SK-N-SH (cell line): ENCODE measurements at regions of chr17 and their contacts with region 1.

Region 1: DNA sequence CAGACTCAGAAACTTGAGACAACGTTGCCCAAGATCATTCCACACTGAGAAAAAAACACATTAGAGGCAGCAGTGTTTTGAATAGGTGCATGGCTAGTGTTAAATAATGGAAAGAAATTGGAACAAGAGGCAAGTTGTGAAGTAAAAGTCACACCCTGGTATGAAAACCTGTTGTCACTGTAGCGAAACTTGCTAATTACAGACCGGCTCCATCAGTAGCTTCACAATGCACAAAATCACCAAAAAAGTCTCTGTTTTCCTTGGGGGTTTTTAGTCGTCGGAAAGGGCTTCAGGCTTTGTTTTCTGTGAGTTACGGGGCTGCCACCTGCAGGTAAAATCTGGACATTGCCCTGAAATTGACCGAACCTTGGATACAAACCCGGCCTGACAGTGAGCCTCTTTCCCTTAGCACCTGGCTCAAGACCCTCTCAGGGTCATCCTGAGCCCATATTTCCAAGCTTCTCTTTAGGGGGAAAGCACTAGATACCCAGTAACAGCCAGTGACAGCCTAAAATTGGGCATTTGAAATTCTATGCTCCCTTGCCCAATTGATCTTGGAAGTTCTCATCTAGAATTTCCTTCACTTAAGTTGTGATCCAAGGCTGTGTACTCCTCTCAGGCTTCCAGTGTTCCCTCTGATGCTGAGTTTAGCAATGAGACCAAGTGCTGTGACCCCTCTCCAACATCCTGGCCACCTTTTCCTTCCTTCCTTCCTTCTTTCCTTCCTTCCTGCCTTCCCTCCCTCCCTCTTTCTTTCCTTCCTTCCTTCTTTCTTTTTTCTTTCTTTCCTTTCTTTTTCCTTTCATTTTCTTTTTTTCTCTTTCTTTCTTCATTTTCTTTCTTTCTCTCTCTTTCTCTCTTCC is 7.2 kb upstream of the GRB2 start:
- DNase-seq: peak; percentile 81
- H3K4me3 ChIP-seq: peak overlapping the region; percentile 3 to 35; a peak in 3 of 4 replicates
- H3K27ac ChIP-seq: no peak overlapping the region
- H3K4me1 ChIP-seq: no peaks in the 10 kb centered on the region
- H3K27me3 ChIP-seq: peaks cover 22% of the 10 kb centered on the region
- CTCF ChIP-seq: peak; percentile 92
- EP300 ChIP-seq: no peak
- RAD21 ChIP-seq: peak; percentile 96

Region 2: DNA sequence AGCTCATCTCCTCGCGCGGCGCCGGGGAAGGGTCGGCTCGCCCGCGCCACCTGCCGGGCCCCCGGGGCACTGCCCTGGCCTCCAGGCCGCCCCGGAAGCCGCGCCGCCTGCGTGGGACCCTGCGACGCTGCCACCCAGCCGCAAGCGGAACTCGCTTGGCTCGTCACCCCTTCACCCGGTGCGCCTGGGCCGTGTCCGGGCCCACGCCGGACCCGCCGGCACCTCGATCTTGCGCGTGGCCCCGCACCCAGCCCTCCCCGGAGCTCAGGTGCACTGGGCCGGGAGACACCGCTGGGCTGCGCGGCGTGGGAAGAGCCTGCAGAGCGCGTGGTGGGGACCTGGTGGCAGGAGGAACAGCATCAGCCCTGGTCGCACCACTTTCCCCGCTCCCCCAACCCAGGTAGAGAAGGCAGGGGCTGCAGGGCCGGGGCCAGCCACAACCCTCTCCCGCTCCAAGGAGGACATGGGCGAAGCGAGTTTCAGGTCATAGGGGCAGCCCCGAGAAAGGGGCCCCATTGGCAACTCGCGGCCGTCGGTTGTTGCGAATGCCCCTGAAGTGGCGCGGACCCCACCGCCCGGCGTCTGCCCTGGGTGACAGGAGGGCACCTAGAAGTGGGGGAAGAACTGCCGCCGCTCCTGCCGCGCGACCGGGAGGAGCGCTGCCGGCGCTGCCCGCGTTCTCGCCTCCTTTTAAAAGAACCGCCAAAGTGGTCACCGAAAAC is 141.3 kb before region 1 on chr17:
- CTCF ChIA-PET with region 1: interaction called, 69 read pairs
- POLR2A ChIA-PET with region 1: interaction called, 10 read pairs
- DNase-seq: peak; percentile 100
- H3K4me3 ChIP-seq: peak overlapping the region; percentile 74 to 79
- H3K27ac ChIP-seq: peak overlapping the region; percentile 51 to 97; a peak in 3 of 4 replicates
- H3K4me1 ChIP-seq: peaks cover 24 to 44% of the 10 kb centered on the region in 2 experiments; a peak in 3 of 4 replicates
- H3K27me3 ChIP-seq: no peaks in the 10 kb centered on the region
- CTCF ChIP-seq: peak; percentile 62
- EP300 ChIP-seq: no peak
- RAD21 ChIP-seq: peak; percentile 17; the same call in 1 of the 2 replicates

Region 3: DNA sequence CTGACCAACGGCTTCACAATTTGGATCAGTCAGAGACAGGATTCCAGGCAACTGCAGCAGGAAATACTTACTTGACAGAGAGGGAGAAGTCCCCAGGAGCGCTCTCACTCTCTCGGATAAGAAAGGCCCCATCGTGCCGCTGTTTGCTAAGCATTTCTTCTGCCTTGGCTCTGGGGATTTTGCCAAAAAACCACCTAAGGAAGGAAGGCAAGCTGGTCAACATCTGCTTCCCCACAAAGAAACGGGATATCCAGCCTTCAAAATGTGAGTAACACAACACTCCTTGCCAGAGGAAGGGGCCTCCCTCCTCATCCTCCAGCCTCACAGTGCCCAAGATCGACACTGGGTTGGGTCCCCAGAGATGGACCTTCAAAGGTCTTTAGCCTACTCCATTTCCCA is 86.9 kb before region 1 on chr17:
- CTCF ChIA-PET with region 1: interaction called, 83 read pairs
- POLR2A ChIA-PET with region 1: interaction called, 4 read pairs
- DNase-seq: no peak
- H3K4me3 ChIP-seq: no peak overlapping the region
- H3K27ac ChIP-seq: peak overlapping the region in 1 of 2 experiments; percentile 62; a peak in 2 of 4 replicates
- H3K4me1 ChIP-seq: peaks cover 3 to 16% of the 10 kb centered on the region in 2 experiments; a peak in 3 of 4 replicates
- H3K27me3 ChIP-seq: no peaks in the 10 kb centered on the region
- CTCF ChIP-seq: no peak
- EP300 ChIP-seq: no peak
- RAD21 ChIP-seq: no peak

Region 4: GRCh38 chr17:75393523-75394331 is 19.0 kb before region 1 on chr17:
- CTCF ChIA-PET with region 1: interaction called, 53 read pairs
- POLR2A ChIA-PET with region 1: no interaction called
- DNase-seq: peak; percentile 98
- H3K4me3 ChIP-seq: peak overlapping the region; percentile 80 to 99
- H3K27ac ChIP-seq: peak overlapping the region; percentile 71 to 95
- H3K4me1 ChIP-seq: peaks cover 12 to 21% of the 10 kb centered on the region in 2 experiments
- H3K27me3 ChIP-seq: no peaks in the 10 kb centered on the region
- CTCF ChIP-seq: peak; percentile 15; the same call in 1 of the 2 replicates
- EP300 ChIP-seq: peak in 1 of 2 experiments; percentile 45; a peak in 1 of 4 replicates
- RAD21 ChIP-seq: peak; percentile 11; the same call in 1 of the 2 replicates

Region 5: DNA sequence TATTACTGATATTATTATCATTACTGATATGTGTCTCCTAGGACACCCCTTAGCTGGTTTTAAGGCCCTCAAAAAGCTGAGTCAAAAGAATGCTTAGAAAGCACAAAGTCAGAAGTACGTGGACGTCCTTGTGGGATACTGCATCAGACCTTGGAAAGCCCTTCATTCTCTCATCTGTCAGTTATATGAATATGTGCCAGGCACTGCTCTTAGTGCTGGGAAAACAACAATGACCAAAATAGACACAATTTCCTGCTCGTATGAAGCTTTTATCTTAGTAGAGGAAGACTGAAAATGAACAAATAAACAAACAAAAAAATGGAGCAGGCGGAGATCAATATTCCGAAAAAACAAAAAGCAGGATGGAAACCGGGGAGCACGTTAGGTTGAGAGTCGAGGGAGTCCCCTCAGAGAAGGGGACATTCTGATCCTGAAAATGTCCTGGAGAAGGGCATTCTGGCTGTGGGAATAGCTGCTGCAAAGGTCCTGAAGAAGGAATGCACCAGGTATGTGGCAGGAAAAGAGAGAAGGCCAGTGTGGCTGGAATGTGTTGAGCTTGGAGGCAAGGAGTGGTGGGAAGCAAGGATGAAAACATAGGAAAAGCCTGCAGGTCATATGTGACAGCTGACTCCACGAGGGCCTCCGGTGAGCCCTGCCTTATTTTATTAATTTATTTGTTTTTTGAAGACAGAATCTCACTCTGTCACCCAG is 28.2 kb after region 1 on chr17:
- CTCF ChIA-PET with region 1: interaction called, 10 read pairs
- POLR2A ChIA-PET with region 1: no interaction called
- DNase-seq: no peak
- H3K4me3 ChIP-seq: no peak overlapping the region
- H3K27ac ChIP-seq: no peak overlapping the region
- H3K4me1 ChIP-seq: no peaks in the 10 kb centered on the region
- H3K27me3 ChIP-seq: no peaks in the 10 kb centered on the region
- CTCF ChIP-seq: no peak
- EP300 ChIP-seq: no peak
- RAD21 ChIP-seq: no peak

Region 6: GRCh38 chr17:75549221-75550138 is 136.8 kb after region 1 on chr17:
- CTCF ChIA-PET with region 1: no interaction called
- POLR2A ChIA-PET with region 1: no interaction called
- DNase-seq: no peak
- H3K4me3 ChIP-seq: no peak overlapping the region
- H3K27ac ChIP-seq: no peak overlapping the region
- H3K4me1 ChIP-seq: no peaks in the 10 kb centered on the region; a peak in 1 of 4 replicates
- H3K27me3 ChIP-seq: no peaks in the 10 kb centered on the region
- CTCF ChIP-seq: no peak
- EP300 ChIP-seq: no peak
- RAD21 ChIP-seq: no peak